IMR-90 (cell line): ENCODE measurements at regions of chr1 and their contacts with region 1.

Region 1: DNA sequence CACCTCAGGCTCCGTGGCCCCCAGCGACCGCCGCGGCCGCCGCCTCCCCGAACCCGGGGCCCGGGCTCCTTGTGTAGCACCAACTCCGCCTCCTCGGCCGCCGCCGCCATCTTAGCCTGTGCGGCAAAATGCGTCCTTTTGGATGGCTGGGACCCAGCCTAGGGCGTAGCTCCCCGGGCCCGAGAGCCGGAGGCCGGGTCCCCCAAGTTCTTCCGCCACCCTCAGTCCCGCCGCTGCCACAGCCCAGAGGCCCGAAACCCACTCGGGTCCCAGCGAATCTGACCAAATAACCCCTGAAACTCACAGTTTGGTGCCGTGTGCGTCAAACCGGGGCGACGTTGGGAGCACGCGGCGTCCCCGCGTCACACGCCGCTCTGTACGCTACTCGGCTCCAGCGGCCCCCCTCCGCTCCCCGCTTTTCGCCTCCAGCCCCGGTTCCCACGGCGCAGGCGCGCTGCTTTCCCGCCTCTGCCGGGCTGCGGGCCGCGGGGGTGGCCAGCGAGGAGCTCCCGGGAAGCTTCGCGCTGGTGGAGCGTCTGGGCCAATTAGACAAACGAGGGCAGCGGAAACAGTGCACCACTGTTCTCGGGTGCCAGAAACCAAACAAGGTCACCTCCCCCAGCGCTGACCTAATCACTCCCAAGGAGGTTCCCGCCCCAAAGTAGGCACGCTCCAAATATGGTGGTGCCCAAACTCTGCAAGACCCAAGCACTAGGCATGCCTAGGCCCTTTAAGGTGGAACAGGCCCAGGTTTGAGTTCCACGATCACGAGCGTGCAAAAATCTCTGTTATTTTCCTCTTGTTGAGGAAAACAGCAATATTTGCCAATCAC is at the start of gene ZNF644:
- DNase-seq: peak; percentile 84
- ATAC-seq: peak; percentile 86
- H3K4me3 ChIP-seq: peak within 1 kb of the TSS; percentile 65
- H3K27ac ChIP-seq: peak within 1 kb of the TSS; percentile 87
- H3K4me1 ChIP-seq: no peaks in the 10 kb centered on the region
- H3K27me3 ChIP-seq: no peaks in the 10 kb centered on the region
- CTCF ChIP-seq: no peak
- POLR2A ChIP-seq: peak; percentile 91
- RAD21 ChIP-seq: no peak
- total RNA-seq, gene ZNF644: 45.3 and 66.7 TPM in 2 replicates

Region 2: DNA sequence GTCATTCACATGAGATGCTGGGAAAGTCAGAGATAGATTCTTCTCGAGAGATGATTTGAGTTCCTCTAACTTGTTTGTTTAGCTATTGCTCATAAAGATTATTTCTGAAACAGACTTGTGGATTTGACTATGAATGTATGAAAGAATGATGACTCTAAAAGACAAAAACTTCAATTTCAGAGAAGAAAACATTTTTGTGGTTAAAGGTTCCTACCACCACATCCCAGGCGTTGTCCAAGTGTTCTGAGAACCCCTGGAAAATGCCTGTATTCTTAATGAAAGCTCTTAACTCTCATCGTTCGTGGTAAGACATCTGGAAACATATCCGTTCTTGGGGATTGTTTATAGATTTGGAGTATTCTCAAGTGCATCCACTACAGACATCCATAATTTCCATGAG is 533.5 kb before region 1 on chr1:
- CTCF ChIA-PET with region 1: no interaction called
- POLR2A ChIA-PET with region 1: no interaction called
- dilution Hi-C with region 1: no loop called
- in situ Hi-C with region 1: no loop called
- intact Hi-C with region 1: no loop called
- DNase-seq: peak; percentile 0
- ATAC-seq: no peak
- H3K4me3 ChIP-seq: no peak overlapping the region
- H3K27ac ChIP-seq: no peak overlapping the region
- H3K4me1 ChIP-seq: no peaks in the 10 kb centered on the region
- H3K27me3 ChIP-seq: no peaks in the 10 kb centered on the region
- CTCF ChIP-seq: no peak
- POLR2A ChIP-seq: no peak
- RAD21 ChIP-seq: no peak

Region 3: GRCh38 chr1:90721210-90722194 is 300.4 kb before region 1 on chr1:
- CTCF ChIA-PET with region 1: no interaction called
- POLR2A ChIA-PET with region 1: no interaction called
- dilution Hi-C with region 1: no loop called
- in situ Hi-C with region 1: no loop called
- intact Hi-C with region 1: loop called (anchors 2 kb)
- DNase-seq: peak; percentile 41
- ATAC-seq: peak; percentile 69
- H3K4me3 ChIP-seq: no peak overlapping the region
- H3K27ac ChIP-seq: no peak overlapping the region
- H3K4me1 ChIP-seq: no peaks in the 10 kb centered on the region
- H3K27me3 ChIP-seq: peaks cover 85% of the 10 kb centered on the region
- CTCF ChIP-seq: peak; percentile 78
- POLR2A ChIP-seq: no peak
- RAD21 ChIP-seq: peak; percentile 70

Region 4: GRCh38 chr1:90850898-90851710 is 170.8 kb before region 1 on chr1:
- CTCF ChIA-PET with region 1: no interaction called
- POLR2A ChIA-PET with region 1: no interaction called
- dilution Hi-C with region 1: no loop called
- in situ Hi-C with region 1: no loop called
- intact Hi-C with region 1: loop called (anchors 5 kb)
- DNase-seq: peak; percentile 55
- ATAC-seq: peak; percentile 100
- H3K4me3 ChIP-seq: peak overlapping the region; percentile 55
- H3K27ac ChIP-seq: no peak overlapping the region
- H3K4me1 ChIP-seq: no peaks in the 10 kb centered on the region
- H3K27me3 ChIP-seq: peaks cover 18% of the 10 kb centered on the region
- CTCF ChIP-seq: peak; percentile 55
- POLR2A ChIP-seq: no peak
- RAD21 ChIP-seq: peak; percentile 28

Region 5: DNA sequence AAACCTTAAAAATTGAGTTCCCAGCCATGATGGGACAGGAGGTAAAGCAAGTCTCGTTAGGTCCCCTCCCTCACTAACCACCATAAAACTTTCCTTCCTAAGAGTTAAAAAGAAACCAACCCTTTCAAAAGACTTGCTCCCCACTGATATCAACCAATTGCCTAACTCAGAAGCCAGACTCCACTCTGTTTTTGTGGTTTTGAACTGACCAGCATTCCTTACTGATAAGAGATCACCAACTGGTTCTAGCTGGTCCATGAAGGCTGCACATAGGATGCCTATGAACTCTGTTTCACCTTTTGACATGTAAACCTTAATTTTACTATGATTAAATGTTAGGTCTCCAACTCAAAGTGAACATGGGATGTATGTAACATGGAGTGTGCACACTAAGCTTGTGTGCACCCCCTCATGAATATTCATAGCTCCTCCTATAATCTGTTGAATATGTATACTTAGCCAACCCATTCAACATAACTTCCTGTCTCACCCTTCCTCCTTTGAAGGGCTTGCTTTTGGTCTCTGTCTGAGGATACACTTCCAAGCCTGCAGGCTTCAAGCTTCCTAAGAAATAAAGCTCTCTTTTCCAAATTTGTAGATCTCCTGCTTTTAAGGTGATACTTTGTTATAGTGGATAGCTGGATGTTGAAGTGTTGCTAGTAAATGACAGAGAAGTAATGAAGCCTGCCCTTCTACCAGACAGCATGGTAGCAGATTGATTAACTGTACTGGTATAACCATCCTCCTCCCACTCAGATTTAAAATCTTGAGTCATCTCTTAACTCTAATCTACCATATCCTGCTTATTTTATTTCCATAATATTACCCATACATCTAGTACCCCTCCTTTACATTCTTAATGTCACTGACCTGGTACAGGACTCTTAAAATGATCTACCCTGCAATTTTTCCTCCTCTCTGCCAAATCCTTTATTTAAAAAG is 95.7 kb before region 1 on chr1:
- CTCF ChIA-PET with region 1: no interaction called
- POLR2A ChIA-PET with region 1: no interaction called
- dilution Hi-C with region 1: no loop called
- in situ Hi-C with region 1: no loop called
- intact Hi-C with region 1: loop called (anchors 5 kb)
- DNase-seq: peak; percentile 84
- ATAC-seq: peak; percentile 76
- H3K4me3 ChIP-seq: no peak overlapping the region
- H3K27ac ChIP-seq: peak overlapping the region; percentile 52; the same call in 1 of the 2 replicates
- H3K4me1 ChIP-seq: peaks cover 14% of the 10 kb centered on the region
- H3K27me3 ChIP-seq: no peaks in the 10 kb centered on the region
- CTCF ChIP-seq: no peak
- POLR2A ChIP-seq: no peak
- RAD21 ChIP-seq: no peak

Region 6: DNA sequence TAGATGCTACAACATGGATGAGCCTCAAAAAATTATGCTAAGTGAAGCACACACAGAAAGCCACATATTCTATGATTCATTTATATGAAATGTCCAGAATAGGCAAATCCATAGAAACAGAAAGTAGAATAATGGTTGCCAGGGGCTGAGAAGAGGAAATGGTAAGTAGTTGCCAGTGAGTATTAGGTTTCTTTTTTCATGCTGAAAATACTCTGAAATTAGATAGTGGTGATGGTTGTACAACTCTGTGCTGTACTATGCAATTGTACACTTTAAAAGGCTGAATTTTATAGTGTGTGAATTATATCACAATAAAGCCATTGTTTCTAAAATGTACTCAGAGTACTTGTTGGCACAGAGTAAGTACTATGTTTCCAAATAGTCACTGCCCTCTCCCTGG is 1480.3 kb after region 1 on chr1:
- CTCF ChIA-PET with region 1: no interaction called
- POLR2A ChIA-PET with region 1: no interaction called
- dilution Hi-C with region 1: no loop called
- in situ Hi-C with region 1: no loop called
- intact Hi-C with region 1: no loop called
- DNase-seq: peak; percentile 73
- ATAC-seq: peak; percentile 77
- H3K4me3 ChIP-seq: no peak overlapping the region
- H3K27ac ChIP-seq: no peak overlapping the region
- H3K4me1 ChIP-seq: no peaks in the 10 kb centered on the region
- H3K27me3 ChIP-seq: no peaks in the 10 kb centered on the region
- CTCF ChIP-seq: no peak
- POLR2A ChIP-seq: no peak
- RAD21 ChIP-seq: no peak